GM12878 (cell line): ENCODE measurements at regions of chr4 and their contacts with region 1.

Region 1: DNA sequence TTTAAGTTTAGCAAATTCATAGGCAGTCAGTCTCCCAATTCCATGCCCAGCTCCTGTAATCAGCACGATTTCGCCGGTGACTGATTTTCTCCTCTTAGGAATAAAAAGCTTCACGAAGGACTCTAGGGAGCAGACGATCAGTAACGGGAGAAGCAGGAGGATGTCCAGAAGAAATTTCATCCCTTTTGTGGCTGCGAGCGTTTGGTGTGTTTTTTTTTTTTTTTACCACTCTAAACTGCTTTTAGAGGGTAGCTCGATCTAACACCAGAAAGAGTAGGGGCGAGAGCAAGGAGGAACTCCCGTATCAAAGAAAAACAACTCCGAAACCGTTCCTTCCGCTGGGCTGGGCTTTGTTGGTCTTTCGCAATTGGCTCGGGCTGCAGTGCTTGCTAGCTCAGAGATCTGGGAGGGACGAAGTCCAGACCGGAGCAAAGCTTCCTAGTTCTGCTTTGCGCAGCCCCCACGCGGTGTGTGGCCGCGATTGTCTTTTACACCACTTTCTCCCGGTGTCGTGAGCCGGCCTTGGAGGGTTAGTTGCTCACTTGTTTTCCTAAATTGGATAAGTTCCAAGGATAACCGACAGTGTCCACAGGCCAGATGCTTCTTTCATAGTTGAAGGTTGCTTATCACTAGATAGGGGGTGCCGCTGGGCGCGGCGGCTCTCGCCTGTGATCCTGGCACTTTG is at the start of gene HSD17B11:
- DNase-seq: peak; percentile 86
- ATAC-seq: peak; percentile 98
- H3K4me3 ChIP-seq: peak within 1 kb of the TSS; percentile 83
- H3K27ac ChIP-seq: peak within 1 kb of the TSS; percentile 71
- H3K4me1 ChIP-seq: peaks cover 3% of the 10 kb centered on the region; the same call in 1 of the 2 replicates
- H3K27me3 ChIP-seq: no peaks in the 10 kb centered on the region
- CTCF ChIP-seq: peak; percentile 5 to 14 (median 8); a peak in 3 of 6 replicates
- EP300 ChIP-seq: no peak
- POLR2A ChIP-seq: peak; percentile 92
- RAD21 ChIP-seq: 0 out of 2 replicates have a peak, but pooled peaks have one; percentile 5
- polyA plus RNA-seq, gene HSD17B11: 24.4 to 29.5 TPM

Region 2: GRCh38 chr4:87422104-87423052 is 31.3 kb after region 1 on chr4 and contains the start of gene NUDT9:
- CTCF ChIA-PET with region 1: interaction called, 25 read pairs
- POLR2A ChIA-PET with region 1: interaction called, 18 read pairs
- RAD21 ChIA-PET with region 1: interaction called, 12 read pairs
- SMC1A ChIA-PET with region 1: interaction called, 51 read pairs
- in situ Hi-C with region 1: no loop called
- intact Hi-C with region 1: loop called (anchors 1 kb)
- DNase-seq: peak; percentile 64
- ATAC-seq: peak; percentile 93
- H3K4me3 ChIP-seq: peak within 1 kb of the TSS; percentile 96
- H3K27ac ChIP-seq: peak within 1 kb of the TSS; percentile 91
- H3K4me1 ChIP-seq: no peaks in the 10 kb centered on the region
- H3K27me3 ChIP-seq: no peaks in the 10 kb centered on the region
- CTCF ChIP-seq: no peak
- EP300 ChIP-seq: peak in 1 of 2 experiments; percentile 62; a peak in 1 of 4 replicates
- POLR2A ChIP-seq: peak; percentile 86
- RAD21 ChIP-seq: no peak
- polyA plus RNA-seq, gene NUDT9: 8.4 to 15.6 TPM

Region 3: GRCh38 chr4:87633243-87633642 is 242.2 kb after region 1 on chr4:
- CTCF ChIA-PET with region 1: no interaction called
- POLR2A ChIA-PET with region 1: no interaction called
- RAD21 ChIA-PET with region 1: no interaction called
- SMC1A ChIA-PET with region 1: no interaction called
- in situ Hi-C with region 1: no loop called
- intact Hi-C with region 1: no loop called
- DNase-seq: no peak
- ATAC-seq: no peak
- H3K4me3 ChIP-seq: no peak overlapping the region
- H3K27ac ChIP-seq: no peak overlapping the region
- H3K4me1 ChIP-seq: no peaks in the 10 kb centered on the region
- H3K27me3 ChIP-seq: no peaks in the 10 kb centered on the region; a peak in 1 of 4 replicates
- CTCF ChIP-seq: no peak
- EP300 ChIP-seq: no peak
- POLR2A ChIP-seq: no peak
- RAD21 ChIP-seq: no peak

Region 4: DNA sequence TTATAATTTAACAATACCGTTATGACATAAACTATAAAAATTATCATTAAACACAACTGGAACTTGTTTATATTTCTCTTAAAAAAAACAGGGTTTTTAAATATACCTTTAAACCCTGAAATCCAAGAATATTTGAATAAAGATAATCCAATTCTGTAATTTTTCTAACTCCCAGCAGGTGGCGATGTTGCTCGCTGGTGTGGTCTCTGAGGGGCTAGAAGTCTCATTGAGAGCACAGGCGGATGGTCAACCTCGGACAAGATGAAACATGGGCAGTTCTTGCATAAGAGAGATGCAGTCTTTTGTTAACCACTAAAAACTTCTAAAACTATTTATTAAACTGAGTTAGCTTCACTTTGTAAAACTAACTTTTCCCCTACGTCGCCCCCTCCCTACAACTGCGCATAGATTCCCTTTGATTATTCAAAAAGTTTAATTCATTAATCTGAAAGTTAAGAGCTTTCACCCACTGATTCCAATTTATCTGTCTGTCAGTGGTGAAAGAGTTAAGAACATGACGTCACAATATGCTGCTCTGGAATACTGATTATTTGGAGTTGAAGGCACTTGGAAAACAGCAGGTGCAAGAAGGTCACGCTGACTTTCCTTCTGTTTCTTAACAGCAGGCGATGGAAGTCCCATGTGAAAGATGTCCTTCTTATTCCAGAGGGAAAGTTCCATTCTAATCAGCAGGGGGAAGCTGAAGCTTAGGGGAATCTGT is 288.6 kb after region 1 on chr4:
- CTCF ChIA-PET with region 1: no interaction called
- POLR2A ChIA-PET with region 1: no interaction called
- RAD21 ChIA-PET with region 1: no interaction called
- SMC1A ChIA-PET with region 1: no interaction called
- in situ Hi-C with region 1: no loop called
- intact Hi-C with region 1: no loop called
- DNase-seq: peak; percentile 2
- ATAC-seq: peak; percentile 61; the same call in 2 of the 3 replicates
- H3K4me3 ChIP-seq: no peak overlapping the region
- H3K27ac ChIP-seq: no peak overlapping the region
- H3K4me1 ChIP-seq: peaks cover 5% of the 10 kb centered on the region; the same call in 1 of the 2 replicates
- H3K27me3 ChIP-seq: no peaks in the 10 kb centered on the region
- CTCF ChIP-seq: peak; percentile 59 to 73 (median 66)
- EP300 ChIP-seq: no peak
- POLR2A ChIP-seq: no peak
- RAD21 ChIP-seq: peak; percentile 86